ENCODE measurements at regions of chr2 and their contacts with region 1.

Region 1: GRCh38 chr2:74482801-74483674 is at the starts of genes CCDC142 and TTC31:
- DNase-seq: peak; percentile 74
- H3K4me3 ChIP-seq: peak within 1 kb of the TSS; percentile 91
- H3K27me3 ChIP-seq: no peaks in the 10 kb centered on the region
- CTCF ChIP-seq: peak; percentile 92
- polyA plus RNA-seq, gene CCDC142: 4.5 and 6.2 TPM in 2 replicates
- polyA plus RNA-seq, gene TTC31: 19.4 and 26.0 TPM in 2 replicates

Region 2: DNA sequence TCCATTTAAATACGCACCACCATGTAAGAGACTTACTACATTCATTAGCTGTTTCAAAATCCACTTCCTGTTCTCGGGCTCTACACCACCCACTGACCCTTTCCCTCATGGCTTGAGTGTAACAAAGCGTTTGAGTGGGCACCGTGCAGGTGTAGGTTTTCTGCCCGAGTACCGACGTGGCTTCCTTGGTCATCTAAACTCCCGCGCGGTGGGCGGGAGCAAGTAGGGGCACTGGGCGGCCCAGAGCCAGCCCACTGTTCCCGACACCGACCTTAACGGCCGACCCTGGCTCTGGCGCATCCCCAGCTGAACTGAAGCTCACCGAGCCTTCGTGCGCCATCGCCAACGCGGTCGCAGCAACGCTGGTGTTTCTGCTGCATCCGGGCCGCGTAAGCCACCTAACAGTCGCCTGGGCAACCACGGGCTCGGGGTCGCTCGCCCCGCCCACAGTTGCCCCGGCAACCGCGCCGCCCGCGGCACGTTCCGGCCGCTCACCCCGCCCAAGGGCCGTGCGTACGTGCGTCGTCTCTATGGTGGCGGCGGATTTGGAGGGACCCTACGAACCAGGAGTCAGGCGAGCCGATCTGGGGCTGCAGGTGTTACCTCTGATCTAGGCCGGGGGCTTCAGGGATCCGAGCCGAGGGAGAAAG is 61.7 kb before region 1 on chr2 and contains the starts of genes C2orf81 and WDR54:
- CTCF ChIA-PET with region 1: no interaction called
- POLR2A ChIA-PET with region 1: no interaction called
- DNase-seq: peak; percentile 35
- H3K4me3 ChIP-seq: peak within 1 kb of the TSS; percentile 55
- H3K27me3 ChIP-seq: no peaks in the 10 kb centered on the region
- CTCF ChIP-seq: no peak
- polyA plus RNA-seq, gene C2orf81: 0.18 and 0.67 TPM in 2 replicates
- polyA plus RNA-seq, gene WDR54: 26.0 and 42.9 TPM in 2 replicates

Region 3: DNA sequence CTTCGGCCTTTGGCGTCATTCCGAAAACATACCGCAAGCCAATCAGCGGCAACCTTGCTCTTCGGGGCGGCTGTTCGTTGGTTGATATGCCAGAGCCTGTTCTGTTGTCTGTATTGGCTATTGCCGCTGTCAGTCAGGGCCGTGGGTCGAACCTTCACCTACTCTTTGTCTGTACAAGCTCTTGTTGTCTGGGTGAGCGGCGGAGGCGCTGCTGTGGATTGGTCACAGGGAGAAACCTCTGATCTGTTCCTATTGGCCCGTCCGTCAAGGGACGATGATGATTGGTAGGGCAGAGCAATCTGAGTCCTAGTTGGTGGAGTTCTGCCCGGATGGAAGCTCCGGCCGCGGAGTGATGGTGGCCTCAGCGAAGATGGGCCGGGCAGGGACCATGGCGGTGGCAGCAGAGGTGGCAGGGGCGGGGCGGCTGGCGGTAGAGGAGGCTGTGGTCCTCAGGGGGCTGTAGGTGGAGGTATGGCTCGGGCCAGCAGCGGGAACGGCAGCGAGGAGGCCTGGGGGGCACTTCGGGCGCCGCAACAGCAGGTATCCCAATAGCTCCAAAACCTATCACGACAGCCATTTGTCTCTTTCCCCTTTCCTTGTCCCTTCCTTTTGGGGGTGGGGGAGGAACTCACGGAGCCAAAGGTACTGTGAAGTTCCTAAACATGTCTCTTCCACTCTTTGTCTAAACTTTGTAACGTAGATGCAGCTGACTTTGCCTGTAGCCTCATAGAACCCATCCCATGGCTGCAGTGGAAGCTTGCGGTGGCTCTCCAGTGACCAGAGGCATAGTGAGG is 24.7 kb before region 1 on chr2 and contains the start of gene WBP1:
- CTCF ChIA-PET with region 1: interaction called, 13 read pairs
- POLR2A ChIA-PET with region 1: interaction called, 5 read pairs
- DNase-seq: peak; percentile 100
- H3K4me3 ChIP-seq: peak within 1 kb of the TSS; percentile 86
- H3K27me3 ChIP-seq: no peaks in the 10 kb centered on the region
- CTCF ChIP-seq: no peak
- polyA plus RNA-seq, gene WBP1: 55.7 and 92.0 TPM in 2 replicates

Region 4: DNA sequence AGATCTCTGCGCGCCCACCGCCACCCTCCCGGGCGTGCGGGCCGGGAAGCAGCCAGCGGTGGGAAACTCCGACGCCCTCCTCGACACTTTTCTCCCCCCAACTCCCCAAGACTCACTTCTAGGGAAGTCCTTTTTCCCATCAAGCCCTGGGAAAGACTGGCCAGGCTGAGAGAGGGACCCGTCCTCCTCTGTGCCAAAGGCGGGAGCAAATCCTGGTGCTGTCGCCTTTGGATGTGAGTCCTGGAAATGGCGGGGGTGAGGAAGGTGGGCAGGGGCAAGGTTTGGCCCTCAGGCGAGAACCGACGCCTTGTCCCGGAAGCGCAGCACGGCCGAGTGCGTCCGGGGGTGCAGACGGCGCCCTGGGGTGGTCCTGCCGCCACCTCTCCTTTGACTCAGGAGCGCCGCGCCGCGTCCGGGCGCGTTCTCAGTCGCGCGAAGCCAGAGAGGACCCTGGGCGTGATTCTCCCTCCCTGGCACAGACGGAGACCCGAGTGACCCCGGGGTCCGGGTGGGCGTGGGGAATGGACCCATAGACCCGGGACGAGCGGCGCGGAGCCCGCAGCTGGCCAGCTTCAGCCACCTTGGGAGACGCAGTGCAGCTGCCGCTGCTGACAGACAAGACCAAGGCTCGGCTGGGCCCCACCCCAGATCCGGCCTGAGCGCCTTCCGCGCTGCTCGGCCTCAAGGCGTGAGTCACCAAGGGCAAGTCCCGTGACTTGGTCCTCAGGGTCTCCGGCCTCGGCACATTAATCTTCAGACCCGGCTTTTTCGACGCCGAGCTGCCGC is 19.9 kb after region 1 on chr2:
- CTCF ChIA-PET with region 1: interaction called, 13 read pairs
- POLR2A ChIA-PET with region 1: no interaction called
- DNase-seq: no peak
- H3K4me3 ChIP-seq: peak overlapping the region; percentile 43
- H3K27me3 ChIP-seq: peaks cover 11% of the 10 kb centered on the region
- CTCF ChIP-seq: peak; percentile 39

Region 5: DNA sequence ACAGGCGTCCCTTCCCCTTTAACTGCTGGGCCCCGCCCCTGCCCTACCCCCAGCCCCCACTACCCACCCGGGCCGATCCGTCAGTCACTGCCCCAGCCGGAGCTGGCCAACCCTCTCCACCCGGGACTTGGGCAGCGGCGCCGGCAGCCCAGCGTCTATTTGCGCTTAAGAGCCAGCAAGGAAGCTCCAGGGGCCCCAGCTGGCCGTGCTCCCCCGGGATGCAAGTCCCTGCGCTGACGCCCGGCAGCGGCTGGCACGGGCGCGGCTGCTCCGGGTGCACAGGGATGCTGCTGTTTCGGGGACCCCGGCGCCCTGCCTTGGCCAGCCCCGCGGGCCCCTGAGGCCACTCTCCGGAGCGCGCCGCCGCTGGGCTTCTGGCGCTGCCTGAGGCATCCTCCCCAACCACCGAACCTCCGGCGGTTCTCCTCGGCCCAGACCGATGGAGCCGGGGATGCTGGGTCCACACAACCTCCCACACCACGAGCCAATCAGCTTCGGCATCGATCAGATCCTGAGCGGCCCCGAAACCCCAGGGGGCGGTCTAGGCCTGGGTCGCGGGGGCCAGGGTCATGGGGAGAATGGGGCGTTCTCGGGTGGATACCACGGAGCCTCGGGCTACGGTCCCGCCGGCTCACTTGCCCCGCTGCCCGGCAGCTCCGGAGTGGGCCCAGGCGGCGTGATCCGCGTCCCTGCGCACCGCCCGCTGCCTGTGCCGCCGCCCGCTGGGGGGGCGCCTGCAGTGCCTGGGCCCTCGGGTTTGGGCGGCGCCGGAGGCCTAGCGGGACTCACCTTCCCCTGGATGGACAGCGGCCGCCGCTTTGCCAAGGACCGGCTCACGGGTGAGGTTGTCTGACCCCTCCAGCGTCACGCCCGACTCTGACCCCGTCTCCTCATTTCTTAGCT is 31.6 kb after region 1 on chr2 and contains the start of gene TLX2:
- CTCF ChIA-PET with region 1: no interaction called
- POLR2A ChIA-PET with region 1: no interaction called
- DNase-seq: no peak
- H3K4me3 ChIP-seq: no peak within 1 kb of the TSS
- H3K27me3 ChIP-seq: peaks cover 58% of the 10 kb centered on the region
- CTCF ChIP-seq: no peak
- polyA plus RNA-seq, gene TLX2: not detected in 2 replicates

Region 6: DNA sequence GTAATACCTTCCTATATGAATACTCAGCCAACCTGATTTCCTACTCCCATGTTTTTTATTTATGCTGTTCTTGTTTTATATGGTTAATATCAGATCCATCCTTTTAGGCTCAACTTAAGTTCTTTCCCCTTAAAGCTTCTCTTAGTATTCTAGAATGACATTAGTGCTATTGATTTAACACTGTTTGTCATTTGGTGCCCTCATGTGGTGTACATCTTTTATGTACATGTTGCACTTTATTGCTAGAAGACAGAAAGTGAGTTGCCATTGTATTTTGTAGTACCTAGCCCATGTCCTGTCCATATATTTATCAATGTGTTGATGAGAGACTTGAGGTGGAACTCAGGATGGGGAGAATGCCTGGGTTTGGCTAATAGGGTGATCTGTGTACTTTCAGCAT is 49.2 kb after region 1 on chr2:
- CTCF ChIA-PET with region 1: interaction called, 12 read pairs
- POLR2A ChIA-PET with region 1: no interaction called
- DNase-seq: no peak
- H3K4me3 ChIP-seq: no peak overlapping the region
- H3K27me3 ChIP-seq: no peaks in the 10 kb centered on the region
- CTCF ChIP-seq: peak; percentile 27; the same call in 1 of the 2 replicates

Region 7: DNA sequence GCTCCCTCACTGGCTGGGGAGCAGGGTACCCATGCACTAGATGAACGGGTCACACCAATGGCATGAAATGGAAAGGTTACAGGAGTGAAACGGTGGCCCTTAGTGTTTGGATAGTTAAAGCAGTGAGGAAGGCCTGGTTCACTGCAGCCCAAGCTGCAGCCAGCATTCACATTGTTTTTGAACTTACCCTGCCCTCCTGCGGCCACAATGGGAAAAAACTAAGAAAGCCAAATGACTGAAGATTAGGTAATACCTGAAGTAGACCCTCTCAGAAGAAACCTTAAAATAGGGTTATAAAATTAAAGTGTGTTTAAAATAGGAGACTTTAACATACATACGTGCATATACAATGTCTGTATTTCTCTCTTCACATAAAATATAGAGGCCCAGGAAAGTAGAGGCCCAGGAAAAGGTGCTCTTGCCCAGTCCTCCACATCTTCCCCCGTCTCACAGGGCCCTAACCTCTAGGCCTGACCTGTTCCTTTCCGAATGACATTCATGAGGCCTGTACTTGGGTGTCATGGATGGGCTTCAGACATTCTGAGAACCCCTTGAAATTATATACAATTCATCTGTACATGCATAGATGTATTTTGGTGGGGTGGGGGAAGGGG is 104.7 kb after region 1 on chr2:
- CTCF ChIA-PET with region 1: interaction called, 149 read pairs
- POLR2A ChIA-PET with region 1: no interaction called
- DNase-seq: no peak
- H3K4me3 ChIP-seq: no peak overlapping the region
- H3K27me3 ChIP-seq: peaks cover 6% of the 10 kb centered on the region; the same call in 1 of the 2 replicates
- CTCF ChIP-seq: peak; percentile 73

Measured in BJ (cell line).